T-cell (primary cell): ENCODE measurements at regions of chr15 and their contacts with region 1.

Region 1: GRCh38 chr15:100726421-100727190 is 124.2 kb downstream of the ASB7 start:
- DNase-seq: no peak
- ATAC-seq: no peak
- H3K4me3 ChIP-seq: no peak overlapping the region
- H3K4me3 Mint-ChIP-seq: no peak overlapping the region
- H3K27ac ChIP-seq: no peak overlapping the region
- H3K27ac Mint-ChIP-seq: no peak overlapping the region
- H3K4me1 ChIP-seq: no peaks in the 10 kb centered on the region
- H3K4me1 Mint-ChIP-seq: no peaks in the 10 kb centered on the region
- H3K27me3 ChIP-seq: peaks cover 0 to 10% of the 10 kb centered on the region in 2 experiments
- H3K27me3 Mint-ChIP-seq: peaks cover 2 to 13% of the 10 kb centered on the region in 2 donors

Region 2: GRCh38 chr15:100761290-100761935 is 34.8 kb after region 1 on chr15:
- CTCF ChIA-PET with region 1: interaction called in 1 of 2 experiments, 10 read pairs
- POLR2A ChIA-PET with region 1: no interaction called
- DNase-seq: no peak
- ATAC-seq: no peak
- H3K4me3 ChIP-seq: no peak overlapping the region
- H3K4me3 Mint-ChIP-seq: no peak overlapping the region
- H3K27ac ChIP-seq: no peak overlapping the region
- H3K27ac Mint-ChIP-seq: no peak overlapping the region
- H3K4me1 ChIP-seq: no peaks in the 10 kb centered on the region
- H3K4me1 Mint-ChIP-seq: peaks cover 0 to 2% (median 0%) of the 10 kb centered on the region in 3 donors
- H3K27me3 ChIP-seq: peaks cover 3 to 32% of the 10 kb centered on the region in 2 experiments
- H3K27me3 Mint-ChIP-seq: peaks cover 36 to 39% of the 10 kb centered on the region in 2 donors